ENCODE measurements at regions of chr17 and their contacts with region 1.

Region 1: DNA sequence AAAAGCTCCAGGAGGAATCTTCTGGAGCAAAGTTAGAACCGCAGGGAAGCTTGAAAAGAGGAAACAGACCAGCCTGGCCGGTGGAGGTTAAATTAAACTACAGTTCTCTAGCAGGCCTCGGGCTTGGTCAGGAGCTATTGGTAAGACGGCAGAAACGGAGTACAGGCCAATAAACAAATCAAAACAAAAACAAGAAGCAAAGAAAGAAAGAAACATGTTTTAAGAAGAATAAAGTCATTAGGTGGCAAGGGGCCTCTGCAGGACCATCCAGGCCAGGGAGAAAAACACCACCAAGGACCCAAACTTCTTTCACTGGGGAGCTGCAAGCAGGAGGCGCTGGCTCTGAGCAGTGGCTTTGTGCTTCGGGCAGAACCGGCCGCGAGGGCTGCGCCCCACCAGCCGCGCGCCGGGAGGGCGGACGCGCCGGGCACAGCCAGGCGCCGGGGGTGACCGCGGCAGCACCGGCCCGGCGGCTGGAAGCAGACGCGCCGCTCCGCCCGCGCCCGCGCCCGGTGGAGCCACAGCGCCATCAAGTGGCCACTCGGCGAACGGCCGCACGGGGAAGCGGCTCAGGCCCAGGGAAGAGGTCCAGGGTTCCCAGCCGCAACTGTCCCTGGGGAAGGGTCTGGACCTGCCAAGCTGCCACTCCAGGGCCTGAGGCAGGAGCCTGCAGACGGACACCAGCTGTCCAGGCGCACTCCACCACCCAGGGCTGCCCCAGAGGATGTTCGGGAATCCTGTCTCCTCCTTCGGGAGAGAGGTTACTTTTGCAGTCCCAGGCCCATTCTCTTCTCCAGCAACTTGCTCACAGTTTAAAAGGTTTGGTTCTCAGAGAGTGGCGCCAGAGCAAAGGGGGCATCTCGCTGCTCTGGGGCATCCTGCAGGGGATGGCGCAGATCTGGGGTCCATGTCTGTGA is 419.4 kb downstream of the SOX9 start:
- DNase-seq: peak; percentile 72 to 91 (median 80)
- ATAC-seq: peak; percentile 96
- H3K4me3 ChIP-seq: no peak overlapping the region
- H3K4me1 ChIP-seq: peaks cover 15% of the 10 kb centered on the region
- CTCF ChIP-seq: peak; percentile 95

Region 2: DNA sequence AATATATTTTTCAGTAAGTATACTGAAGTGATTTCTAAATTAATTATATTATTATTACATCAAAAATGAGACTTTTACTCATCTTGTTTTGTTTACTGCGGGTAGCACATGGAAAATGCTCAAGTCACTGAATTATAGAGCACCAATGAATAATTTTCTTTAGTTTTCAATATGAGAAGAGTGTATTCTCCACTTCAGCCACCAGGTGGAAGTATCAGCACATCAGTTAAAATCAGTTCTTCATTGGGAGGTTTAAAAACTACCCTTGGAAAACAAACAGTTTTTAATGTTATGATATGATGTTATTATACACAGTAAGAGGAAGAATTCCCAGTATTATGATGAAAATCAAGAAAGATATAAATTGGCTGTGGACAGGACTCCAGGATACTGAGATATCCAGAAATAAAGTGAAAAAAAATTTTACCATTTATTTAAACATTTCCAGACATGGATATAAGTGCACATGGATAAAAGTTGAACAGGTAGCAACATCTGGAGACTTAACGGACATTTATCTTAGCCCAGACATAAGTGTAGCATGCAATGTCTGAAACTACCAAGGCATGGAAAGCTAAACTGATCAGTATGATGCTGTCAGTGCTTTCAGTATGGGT is 1903.6 kb before region 1 on chr17:
- intact Hi-C with region 1: loop called (anchors 10 kb)
- DNase-seq: peak in 1 of 3 donors; percentile 43
- ATAC-seq: peak; percentile 50
- H3K4me3 ChIP-seq: no peak overlapping the region
- H3K4me1 ChIP-seq: no peaks in the 10 kb centered on the region
- CTCF ChIP-seq: peak; percentile 23

Region 3: DNA sequence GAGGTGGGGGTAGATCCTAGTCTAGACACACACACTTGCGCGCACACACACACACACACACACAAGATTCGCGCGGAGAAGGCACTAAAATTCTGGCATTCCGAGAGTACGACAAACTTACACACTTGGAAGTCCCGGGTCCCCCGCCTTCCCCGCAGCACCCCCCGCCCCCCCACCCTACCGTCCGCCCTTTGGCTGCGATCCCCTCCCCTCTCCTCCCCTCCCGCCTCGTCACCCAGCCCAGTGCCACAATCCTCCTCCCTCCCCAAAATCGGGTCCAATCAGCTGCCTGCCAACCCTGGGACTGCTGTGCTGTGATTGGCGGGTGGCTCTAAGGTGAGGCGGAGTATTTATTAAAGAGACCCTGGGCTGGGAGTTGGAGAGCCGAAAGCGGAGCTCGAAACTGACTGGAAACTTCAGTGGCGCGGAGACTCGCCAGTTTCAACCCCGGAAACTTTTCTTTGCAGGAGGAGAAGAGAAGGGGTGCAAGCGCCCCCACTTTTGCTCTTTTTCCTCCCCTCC is 419.5 kb before region 1 on chr17 and contains the start of gene SOX9:
- intact Hi-C with region 1: loop called in 1 of 2 experiments (anchors 5 kb)
- DNase-seq: peak; percentile 89 to 90 (median 89)
- ATAC-seq: peak; percentile 81
- H3K4me3 ChIP-seq: peak within 1 kb of the TSS; percentile 74
- H3K4me1 ChIP-seq: peaks cover 14% of the 10 kb centered on the region
- CTCF ChIP-seq: no peak
- total RNA-seq, gene SOX9: 17.2 to 46.0 (median 39.8) TPM

Measured in mucosa of descending colon (tissue), 3 donors.